H1 (cell line): ENCODE measurements at regions of chr17 and their contacts with region 1.

Region 1: GRCh38 chr17:12744298-12744697 is 45.0 kb upstream of the ARHGAP44 start:
- DNase-seq: no peak
- H3K4me3 ChIP-seq: no peak overlapping the region
- H3K27ac ChIP-seq: no peak overlapping the region
- H3K4me1 ChIP-seq: peaks cover 0 to 3% (median 0%) of the 10 kb centered on the region in 4 experiments; a peak in 1 of 7 replicates
- H3K27me3 ChIP-seq: no peaks in the 10 kb centered on the region
- CTCF ChIP-seq: no peak
- EP300 ChIP-seq: no peak
- POLR2A ChIP-seq: no peak
- RAD21 ChIP-seq: no peak

Region 2: DNA sequence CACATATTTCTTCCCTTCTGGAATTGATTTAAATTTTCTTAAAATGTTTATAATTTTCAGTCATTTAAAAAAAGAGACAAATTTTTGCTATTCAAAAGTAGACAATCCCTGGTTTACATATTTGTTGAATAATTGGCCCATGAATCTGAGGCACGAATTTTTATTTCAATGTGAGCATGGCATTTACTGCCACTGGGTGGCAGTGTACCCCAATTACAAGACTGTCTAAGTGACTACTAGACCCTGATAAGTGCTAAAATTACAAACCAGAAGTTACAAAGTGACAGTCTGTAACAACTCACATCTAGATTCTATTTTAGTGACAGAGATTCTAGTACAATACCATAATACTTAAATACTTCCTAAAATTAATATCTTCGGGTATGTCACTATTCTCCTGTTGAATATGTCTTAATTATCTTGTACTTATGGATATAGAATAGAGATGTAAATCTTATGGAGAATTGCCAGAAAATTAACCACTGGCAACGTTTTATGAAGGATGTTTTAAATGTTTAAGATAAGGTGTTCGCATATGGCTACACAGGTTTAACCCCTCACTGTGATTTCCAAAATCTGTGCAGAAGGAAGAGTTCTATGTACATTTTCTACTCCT is 487.8 kb before region 1 on chr17:
- CTCF ChIA-PET with region 1: interaction called, 15 read pairs
- POLR2A ChIA-PET with region 1: no interaction called
- DNase-seq: no peak
- H3K4me3 ChIP-seq: no peak overlapping the region
- H3K27ac ChIP-seq: no peak overlapping the region
- H3K4me1 ChIP-seq: no peaks in the 10 kb centered on the region
- H3K27me3 ChIP-seq: peaks cover 0 to 1% (median 0%) of the 10 kb centered on the region in 4 experiments; a peak in 1 of 7 replicates
- CTCF ChIP-seq: peak in 2 of 3 experiments; percentile 57 to 73; a peak in 3 of 4 replicates
- EP300 ChIP-seq: no peak
- POLR2A ChIP-seq: no peak
- RAD21 ChIP-seq: peak; percentile 86 to 88

Region 3: DNA sequence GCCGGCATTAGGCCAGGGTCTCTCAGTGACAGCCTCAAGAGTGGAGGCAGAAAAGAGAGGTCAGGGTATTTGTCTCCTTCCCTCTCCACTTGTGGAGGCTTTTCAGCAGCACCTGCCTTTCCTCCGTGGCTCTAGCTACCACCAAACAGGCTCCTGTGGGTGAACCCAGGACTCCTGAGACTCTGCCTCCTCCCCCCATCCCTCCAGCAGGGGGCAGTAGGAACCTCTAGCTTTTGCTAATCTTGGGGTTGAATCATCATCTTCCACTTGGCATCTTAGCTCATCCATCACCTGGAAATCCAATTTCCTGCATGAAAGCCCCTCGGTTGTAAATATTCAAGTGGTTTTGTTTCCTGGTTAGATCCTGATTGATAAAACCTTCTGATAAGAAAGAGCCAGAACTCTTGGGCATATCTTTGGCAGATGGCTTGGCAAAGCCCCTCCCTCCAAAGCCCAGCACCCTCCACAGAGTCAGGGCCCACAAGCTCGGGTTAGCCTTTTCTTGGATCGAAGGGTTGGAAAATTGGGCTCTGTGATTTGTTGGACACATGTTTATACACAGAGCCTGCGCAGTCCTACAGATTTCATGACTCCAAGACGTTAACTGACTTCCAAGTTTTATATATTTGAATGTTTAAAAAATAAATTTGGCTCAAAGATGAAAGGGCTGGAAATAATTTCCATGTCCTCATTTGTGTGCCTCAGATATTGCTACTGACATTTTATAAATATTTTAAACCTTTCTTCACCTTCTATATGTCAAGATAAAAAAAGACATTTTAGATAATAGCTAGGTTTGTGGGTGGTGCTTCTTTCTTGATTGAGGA is 401.5 kb before region 1 on chr17:
- CTCF ChIA-PET with region 1: interaction called, 12 read pairs
- POLR2A ChIA-PET with region 1: no interaction called
- DNase-seq: peak; percentile 36 to 94
- H3K4me3 ChIP-seq: no peak overlapping the region
- H3K27ac ChIP-seq: no peak overlapping the region
- H3K4me1 ChIP-seq: no peaks in the 10 kb centered on the region
- H3K27me3 ChIP-seq: no peaks in the 10 kb centered on the region
- CTCF ChIP-seq: peak; percentile 73 to 79 (median 73)
- EP300 ChIP-seq: no peak
- POLR2A ChIP-seq: no peak
- RAD21 ChIP-seq: peak; percentile 80 to 88

Region 4: GRCh38 chr17:12730931-12731521 is 13.3 kb before region 1 on chr17:
- CTCF ChIA-PET with region 1: interaction called, 14 read pairs
- POLR2A ChIA-PET with region 1: no interaction called
- DNase-seq: peak in 1 of 2 experiments; percentile 63
- H3K4me3 ChIP-seq: 0 out of 8 replicates have a peak overlapping the region, but pooled peaks of 1 of the 4 experiments have one; percentile 0
- H3K27ac ChIP-seq: peak overlapping the region; percentile 55
- H3K4me1 ChIP-seq: peaks cover 0 to 6% (median 2%) of the 10 kb centered on the region in 4 experiments; a peak in 5 of 7 replicates
- H3K27me3 ChIP-seq: no peaks in the 10 kb centered on the region
- CTCF ChIP-seq: no peak
- EP300 ChIP-seq: no peak
- POLR2A ChIP-seq: no peak
- RAD21 ChIP-seq: no peak

Region 5: GRCh38 chr17:12756786-12757185 is 12.5 kb after region 1 on chr17:
- CTCF ChIA-PET with region 1: interaction called, 21 read pairs
- POLR2A ChIA-PET with region 1: no interaction called
- DNase-seq: no peak
- H3K4me3 ChIP-seq: no peak overlapping the region
- H3K27ac ChIP-seq: no peak overlapping the region
- H3K4me1 ChIP-seq: no peaks in the 10 kb centered on the region
- H3K27me3 ChIP-seq: no peaks in the 10 kb centered on the region
- CTCF ChIP-seq: no peak
- EP300 ChIP-seq: no peak
- POLR2A ChIP-seq: no peak
- RAD21 ChIP-seq: no peak